Ovary (tissue), 10 donors: ENCODE measurements at regions of chr17 and their contacts with region 1.

Region 1: GRCh38 chr17:34895383-34895782 is 65.9 kb downstream of the CCT6B start:
- DNase-seq: no peak
- H3K4me3 ChIP-seq: no peak overlapping the region
- H3K27ac ChIP-seq: no peak overlapping the region
- H3K4me1 ChIP-seq: no peaks in the 10 kb centered on the region
- H3K27me3 ChIP-seq: no peaks in the 10 kb centered on the region
- CTCF ChIP-seq: no peak
- EP300 ChIP-seq: no peak
- POLR2A ChIP-seq: no peak

Region 2: DNA sequence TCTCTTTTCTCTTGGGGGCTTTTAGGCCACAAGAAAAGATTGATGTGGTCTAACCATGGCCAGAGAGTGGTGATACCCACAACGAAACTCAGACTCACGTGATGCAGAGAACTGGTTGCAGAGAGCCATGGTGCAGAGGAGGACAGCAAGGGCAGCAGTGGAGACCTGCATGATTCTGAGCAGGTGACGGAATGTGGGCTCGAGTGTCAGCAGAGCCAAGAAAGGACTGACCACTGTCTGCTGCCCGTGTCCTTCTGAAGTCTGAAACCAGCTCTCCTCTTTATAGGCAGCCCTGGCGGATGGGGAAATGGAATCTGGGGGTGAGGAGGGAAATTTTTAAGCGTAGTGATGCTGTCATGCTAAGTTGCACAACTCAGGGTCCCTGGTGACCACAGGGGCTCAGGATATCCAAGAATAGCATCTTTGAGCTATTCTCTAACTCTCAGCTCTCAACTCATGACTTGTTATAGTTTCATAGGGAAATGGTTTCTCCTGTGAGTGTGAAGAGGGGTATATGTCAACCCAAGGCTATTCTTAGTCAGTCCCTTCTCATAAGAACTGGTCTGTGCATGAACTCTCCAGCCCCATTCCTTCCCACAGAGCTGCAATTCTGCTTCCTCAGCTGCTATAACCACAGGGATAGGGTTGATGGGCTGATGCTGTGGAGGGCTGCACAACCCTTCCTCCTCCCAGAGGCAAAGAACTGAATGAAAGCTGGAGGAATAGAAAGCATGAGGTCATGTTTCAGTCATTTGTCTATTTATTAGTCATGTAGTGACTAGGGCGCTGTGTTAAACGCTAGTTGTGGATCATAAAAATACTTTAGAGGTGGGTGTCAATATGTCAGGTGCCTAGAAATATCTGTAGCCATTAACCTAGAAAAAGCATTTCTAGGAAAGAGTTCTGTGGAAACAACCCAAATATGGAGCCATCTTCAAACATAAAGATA is 1194.8 kb after region 1 on chr17 and contains the start of gene CCL3:
- intact Hi-C with region 1: loop called in 1 of 4 experiments (anchors 5 kb)
- DNase-seq: no peak
- H3K4me3 ChIP-seq: no peak within 1 kb of the TSS
- H3K27ac ChIP-seq: no peak within 1 kb of the TSS
- H3K4me1 ChIP-seq: no peaks in the 10 kb centered on the region
- H3K27me3 ChIP-seq: no peaks in the 10 kb centered on the region
- CTCF ChIP-seq: no peak
- EP300 ChIP-seq: no peak
- POLR2A ChIP-seq: no peak
- total RNA-seq, gene CCL3: 0.57 to 9.3 (median 3.1) TPM